ENCODE measurements at regions of chr17 and their contacts with region 1.

Region 1: GRCh38 chr17:66373944-66374817 is 71.8 kb downstream of the PRKCA start:
- DNase-seq: peak in 1 of 2 donors; percentile 19
- ATAC-seq: no peak
- H3K4me3 ChIP-seq: no peak overlapping the region
- H3K27ac ChIP-seq: no peak overlapping the region
- H3K4me1 ChIP-seq: no peaks in the 10 kb centered on the region
- H3K27me3 ChIP-seq: no peaks in the 10 kb centered on the region
- CTCF ChIP-seq: no peak

Region 2: GRCh38 chr17:66405836-66406677 is 31.9 kb after region 1 on chr17:
- intact Hi-C with region 1: loop called in 1 of 2 experiments (anchors 5 kb)
- DNase-seq: no peak
- ATAC-seq: no peak
- H3K4me3 ChIP-seq: no peak overlapping the region
- H3K27ac ChIP-seq: no peak overlapping the region
- H3K4me1 ChIP-seq: peaks cover 23% of the 10 kb centered on the region
- H3K27me3 ChIP-seq: no peaks in the 10 kb centered on the region
- CTCF ChIP-seq: no peak

Region 3: DNA sequence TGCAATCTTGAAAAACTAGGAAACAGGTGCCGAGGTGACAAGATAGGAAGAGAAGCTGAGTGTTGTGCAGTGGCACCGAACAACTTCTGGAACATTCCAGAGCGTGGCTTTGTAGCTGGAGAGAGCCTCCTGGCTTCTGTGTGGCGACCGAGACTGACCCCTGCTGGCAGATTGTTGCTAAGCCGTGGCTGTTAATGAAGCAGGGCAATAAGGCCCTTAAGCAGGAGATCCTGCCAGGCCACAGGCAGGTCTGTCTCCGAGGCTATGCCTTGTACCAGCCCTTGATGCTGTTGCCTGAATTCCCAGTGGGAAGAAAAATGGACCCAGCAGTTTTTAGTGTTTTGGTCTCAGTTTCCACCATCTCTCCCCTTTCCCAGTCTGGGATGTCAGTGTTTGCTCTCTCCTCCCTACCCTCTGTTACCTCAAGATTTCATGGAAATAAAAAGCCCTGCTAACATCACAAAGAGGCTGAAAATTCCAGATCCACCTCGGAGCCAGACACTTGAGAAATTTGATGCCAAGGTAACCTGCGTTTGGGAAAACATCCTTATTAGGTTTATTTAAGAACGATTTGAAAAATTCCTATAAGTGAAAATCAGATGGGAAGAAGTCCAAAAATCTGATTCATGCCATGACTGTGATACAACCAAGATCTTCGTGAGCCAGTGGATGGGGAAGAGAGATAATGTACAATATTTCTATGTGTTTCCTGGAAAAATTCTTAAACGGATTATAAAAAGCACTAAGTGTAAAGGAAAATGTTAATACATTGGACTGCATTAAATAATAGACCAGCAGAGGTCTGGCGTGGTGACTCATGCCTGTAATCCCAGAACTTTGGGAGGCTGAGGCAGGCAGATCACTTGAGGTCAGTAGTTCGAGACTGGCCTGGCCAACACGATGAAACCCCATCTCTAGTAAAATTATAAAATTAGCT is 193.3 kb after region 1 on chr17:
- intact Hi-C with region 1: no loop called
- DNase-seq: peak; percentile 72 to 84
- ATAC-seq: peak in 3 of 4 donors; percentile 64 to 85 (median 83)
- H3K4me3 ChIP-seq: no peak overlapping the region
- H3K27ac ChIP-seq: no peak overlapping the region
- H3K4me1 ChIP-seq: no peaks in the 10 kb centered on the region
- H3K27me3 ChIP-seq: no peaks in the 10 kb centered on the region
- CTCF ChIP-seq: peak; percentile 73

Measured in psoas muscle (tissue), 8 donors.